Prostate gland (tissue), 2 donors: ENCODE measurements at regions of chr3 and their contacts with region 1.

Region 1: DNA sequence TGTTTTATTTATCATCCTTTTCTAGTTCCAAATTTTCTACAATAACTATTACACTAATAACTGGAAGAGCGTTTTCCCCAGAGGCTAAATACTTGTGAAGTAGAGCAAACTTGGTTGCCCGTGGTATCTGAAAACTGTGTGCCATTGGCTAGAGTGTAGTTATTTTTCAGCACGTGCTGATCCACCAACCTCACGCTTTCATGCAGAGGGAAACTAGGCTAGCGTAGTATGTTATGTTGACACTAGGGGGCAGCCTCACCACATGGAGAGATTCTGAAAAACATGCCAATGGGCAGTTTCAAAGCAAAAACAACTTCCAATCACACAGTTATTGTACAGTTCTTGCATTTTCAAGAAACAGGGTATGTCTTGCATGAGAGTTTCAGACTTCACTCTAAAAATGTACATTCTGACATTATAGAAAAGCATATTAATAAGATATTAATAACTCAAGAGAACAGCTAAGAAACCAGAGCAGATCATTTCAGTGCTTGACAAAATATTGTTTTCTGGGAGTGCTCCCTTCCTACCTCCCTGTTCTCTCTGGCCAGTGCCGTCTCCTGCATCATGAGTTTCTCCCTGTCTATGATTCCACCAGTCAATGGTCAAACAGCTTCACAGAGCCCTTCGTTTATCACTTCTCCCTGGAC is 39.7 kb downstream of the SPATA12 start:
- DNase-seq: peak; percentile 70
- H3K4me3 ChIP-seq: no peak overlapping the region
- H3K27ac ChIP-seq: no peak overlapping the region
- H3K4me1 ChIP-seq: no peaks in the 10 kb centered on the region
- H3K27me3 ChIP-seq: no peaks in the 10 kb centered on the region
- CTCF ChIP-seq: peak; percentile 64 to 87 (median 84)
- POLR2A ChIP-seq: no peak

Region 2: DNA sequence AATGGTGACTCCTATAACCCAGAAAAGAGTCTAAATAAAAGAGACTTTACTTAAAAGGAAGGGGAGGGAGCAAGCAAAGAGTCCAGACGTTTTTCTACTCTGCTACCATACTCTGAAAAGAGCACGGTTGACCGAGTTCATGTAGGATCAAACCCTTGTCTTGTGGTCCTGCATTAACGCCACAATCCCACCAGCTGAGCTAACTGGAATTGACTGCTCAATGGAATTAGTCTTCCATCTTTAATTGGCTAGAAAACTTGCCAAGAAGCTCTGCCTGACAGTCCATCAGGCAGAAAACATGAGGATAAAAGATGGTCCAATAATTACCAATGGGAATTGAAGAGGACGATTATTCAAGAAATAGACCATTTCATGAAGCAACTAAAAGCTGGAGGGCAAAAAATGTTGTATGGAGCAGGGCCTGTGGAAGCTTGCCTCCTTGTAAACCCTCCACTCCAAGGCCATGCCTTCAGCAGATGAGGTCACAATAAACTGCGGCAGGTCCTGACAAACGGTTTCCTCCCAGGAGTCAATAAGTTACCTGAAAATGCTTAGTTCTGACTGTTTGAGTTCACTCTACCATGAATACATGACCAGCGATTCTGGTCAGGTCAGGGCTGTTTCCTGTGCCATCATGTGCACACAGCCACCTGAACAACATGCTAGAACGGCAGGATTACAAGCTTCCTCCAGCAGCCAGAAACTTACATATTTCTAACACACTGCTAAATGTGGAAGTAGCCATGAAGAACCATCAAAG is 262.8 kb before region 1 on chr3:
- intact Hi-C with region 1: no loop called
- DNase-seq: no peak
- H3K4me3 ChIP-seq: no peak overlapping the region
- H3K27ac ChIP-seq: no peak overlapping the region
- H3K4me1 ChIP-seq: no peaks in the 10 kb centered on the region
- H3K27me3 ChIP-seq: no peaks in the 10 kb centered on the region
- CTCF ChIP-seq: no peak
- POLR2A ChIP-seq: no peak

Region 3: GRCh38 chr3:56988458-56989168 is 111.6 kb before region 1 on chr3:
- intact Hi-C with region 1: no loop called
- DNase-seq: peak; percentile 83
- H3K4me3 ChIP-seq: no peak overlapping the region
- H3K27ac ChIP-seq: peak overlapping the region in 1 of 2 donors; percentile 41
- H3K4me1 ChIP-seq: peaks cover 8% of the 10 kb centered on the region
- H3K27me3 ChIP-seq: no peaks in the 10 kb centered on the region
- CTCF ChIP-seq: peak; percentile 62 to 91 (median 86)
- POLR2A ChIP-seq: no peak

Region 4: DNA sequence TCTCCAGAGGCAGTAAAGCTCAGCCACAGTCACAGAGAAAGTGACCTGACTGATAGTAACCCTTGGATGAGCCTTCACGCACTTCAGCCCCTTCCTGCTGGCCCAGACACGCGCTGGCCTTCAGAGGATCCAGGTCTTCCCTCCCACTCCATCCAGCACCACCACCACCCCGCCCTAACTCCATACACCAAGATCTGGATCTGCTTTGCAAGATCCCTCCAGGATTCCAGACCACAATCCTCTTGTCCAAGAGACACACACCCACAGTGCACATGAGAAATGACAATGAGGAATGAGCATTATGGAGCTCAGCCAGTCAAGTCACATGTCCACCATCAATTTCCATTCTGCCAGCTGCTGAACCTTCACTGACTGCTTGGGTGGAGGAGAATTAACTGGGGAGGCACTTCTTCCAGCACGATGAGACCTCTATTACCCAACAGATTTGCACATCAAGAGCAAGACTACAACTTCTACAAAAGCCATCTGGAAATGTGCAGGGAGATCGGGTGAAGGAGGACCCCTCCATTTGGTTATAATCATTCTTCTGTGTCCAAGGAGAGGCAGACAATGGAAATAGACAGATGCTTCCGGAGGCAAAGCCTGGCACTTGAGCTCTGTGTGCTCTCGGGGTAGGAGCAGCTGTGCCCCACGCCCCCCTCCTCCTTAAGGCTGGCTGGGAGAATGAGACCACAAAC is 52.0 kb before region 1 on chr3:
- intact Hi-C with region 1: no loop called
- DNase-seq: no peak
- H3K4me3 ChIP-seq: no peak overlapping the region
- H3K27ac ChIP-seq: no peak overlapping the region
- H3K4me1 ChIP-seq: no peaks in the 10 kb centered on the region
- H3K27me3 ChIP-seq: no peaks in the 10 kb centered on the region
- CTCF ChIP-seq: no peak
- POLR2A ChIP-seq: no peak

Region 5: DNA sequence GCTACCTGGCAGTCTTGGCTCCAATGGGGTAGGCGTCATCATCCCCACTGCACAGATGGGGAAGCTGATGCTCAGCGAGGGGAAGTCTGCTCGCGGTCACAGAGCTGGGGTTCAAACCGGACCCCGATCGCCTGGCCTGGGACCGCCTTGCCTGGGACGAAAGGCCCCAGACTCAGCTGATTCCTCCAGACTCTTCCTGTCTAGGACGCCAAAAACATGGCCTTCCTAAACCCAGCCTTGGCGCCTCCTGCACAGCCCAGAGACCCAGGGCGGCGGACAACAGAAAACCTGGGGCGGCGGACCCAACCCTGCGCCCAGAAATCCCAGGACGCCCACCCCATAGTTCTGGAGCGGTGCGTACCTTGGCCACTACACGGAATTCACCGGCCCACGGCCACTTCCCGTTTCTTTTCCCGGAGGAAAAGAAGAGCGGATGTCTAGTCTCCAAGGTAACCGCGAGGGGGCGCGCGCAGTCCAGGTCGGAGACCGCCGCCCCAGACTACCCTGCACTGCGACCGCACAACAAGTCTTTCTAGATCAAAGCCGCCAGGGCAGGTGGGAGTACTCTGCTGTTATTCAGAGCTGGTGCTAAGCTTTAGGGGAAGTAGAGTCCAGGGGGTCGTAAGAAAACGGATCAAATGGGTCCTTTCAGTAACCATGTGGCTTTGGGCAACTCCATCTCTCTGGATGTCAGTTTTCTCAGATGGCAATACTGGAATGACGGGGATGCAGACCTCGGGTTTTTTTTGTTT is 69.9 kb after region 1 on chr3:
- intact Hi-C with region 1: loop called (anchors 5 kb)
- DNase-seq: peak; percentile 58
- H3K4me3 ChIP-seq: peak overlapping the region; percentile 29 to 39
- H3K27ac ChIP-seq: no peak overlapping the region
- H3K4me1 ChIP-seq: no peaks in the 10 kb centered on the region
- H3K27me3 ChIP-seq: no peaks in the 10 kb centered on the region
- CTCF ChIP-seq: peak; percentile 54 to 84 (median 73)
- POLR2A ChIP-seq: no peak

Region 6: GRCh38 chr3:57221883-57222282 is 121.7 kb after region 1 on chr3:
- intact Hi-C with region 1: loop called (anchors 2 kb)
- DNase-seq: no peak
- H3K4me3 ChIP-seq: no peak overlapping the region
- H3K27ac ChIP-seq: no peak overlapping the region
- H3K4me1 ChIP-seq: no peaks in the 10 kb centered on the region
- H3K27me3 ChIP-seq: no peaks in the 10 kb centered on the region
- CTCF ChIP-seq: peak in 2 of 4 experiments; percentile 8 to 46
- POLR2A ChIP-seq: no peak